ENCODE measurements at regions of chr13 and their contacts with region 1.

Region 1: GRCh38 chr13:40682449-40683240 is 16.2 kb upstream of the FOXO1 start:
- DNase-seq: no peak
- ATAC-seq: peak in 2 of 8 donors; percentile 12 to 30
- H3K4me3 ChIP-seq: no peak overlapping the region
- H3K27ac ChIP-seq: no peak overlapping the region
- H3K4me1 ChIP-seq: peaks cover 0 to 27% (median 13%) of the 10 kb centered on the region in 9 donors
- H3K27me3 ChIP-seq: no peaks in the 10 kb centered on the region
- CTCF ChIP-seq: peak; percentile 57 to 83 (median 70)

Region 2: DNA sequence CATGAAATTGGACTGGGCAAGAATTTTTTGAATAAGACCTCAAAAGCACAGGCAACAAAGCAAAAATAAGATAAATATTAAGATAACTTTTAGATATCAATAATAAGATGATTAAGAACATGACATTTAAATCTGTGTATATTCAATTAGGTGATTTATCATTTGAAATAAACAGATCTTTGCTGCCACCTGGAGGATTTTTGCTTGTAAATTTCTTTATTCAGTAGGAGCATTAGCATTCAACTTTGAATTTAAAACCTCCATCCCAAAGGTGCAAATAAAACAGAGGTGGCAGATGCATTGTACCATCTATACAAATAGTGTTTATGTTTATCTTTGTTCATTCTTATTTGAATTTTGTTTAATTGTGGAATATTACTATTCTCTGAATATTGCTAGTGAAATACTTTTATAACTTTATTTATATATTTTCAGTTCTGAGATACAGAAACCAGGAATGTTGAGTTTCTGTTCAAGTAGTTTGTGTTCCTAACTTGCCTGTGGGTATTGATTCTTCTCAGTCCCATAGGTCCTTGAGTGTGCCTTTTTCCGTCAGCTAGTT is 1006.2 kb before region 1 on chr13:
- intact Hi-C with region 1: loop called in 5 of 10 experiments (anchors 2 to 10 kb)
- DNase-seq: peak in 1 of 2 donors; percentile 36
- ATAC-seq: no peak
- H3K4me3 ChIP-seq: no peak overlapping the region
- H3K27ac ChIP-seq: no peak overlapping the region
- H3K4me1 ChIP-seq: peaks cover 0 to 4% (median 0%) of the 10 kb centered on the region in 9 donors
- H3K27me3 ChIP-seq: no peaks in the 10 kb centered on the region
- CTCF ChIP-seq: peak; percentile 14 to 72 (median 56)

Region 3: DNA sequence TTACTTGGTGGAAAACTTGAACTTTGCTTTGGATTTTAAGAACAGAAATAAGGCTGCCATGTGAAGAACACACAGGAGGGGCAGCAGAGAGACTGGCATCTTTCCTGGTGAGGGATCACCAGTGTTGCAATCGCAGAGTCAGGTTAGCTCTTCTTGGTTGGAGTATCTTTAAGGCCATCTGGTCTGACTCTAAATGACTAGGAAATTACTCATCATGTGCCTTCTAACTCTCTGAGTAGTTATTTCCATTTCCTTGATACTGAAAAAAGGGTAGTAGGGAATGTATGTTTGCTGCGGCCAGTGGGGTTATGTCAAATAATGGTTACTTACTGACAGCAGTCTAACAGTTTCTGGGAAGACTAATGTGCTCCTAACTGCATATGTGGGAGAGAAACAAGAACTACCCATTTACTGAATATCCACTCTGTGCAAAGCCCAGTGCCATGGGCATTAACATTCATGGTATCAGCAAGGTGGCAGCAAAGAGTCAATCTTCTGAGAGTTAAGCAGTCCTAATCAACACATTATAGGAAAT is 905.1 kb before region 1 on chr13:
- intact Hi-C with region 1: loop called in 7 of 10 experiments (anchors 5 to 10 kb)
- DNase-seq: no peak
- ATAC-seq: peak in 1 of 8 donors; percentile 56
- H3K4me3 ChIP-seq: no peak overlapping the region
- H3K27ac ChIP-seq: peak overlapping the region in 1 of 10 donors; percentile 51
- H3K4me1 ChIP-seq: peaks cover 0 to 17% (median 0%) of the 10 kb centered on the region in 9 donors
- H3K27me3 ChIP-seq: no peaks in the 10 kb centered on the region
- CTCF ChIP-seq: peak in 5 of 9 donors; percentile 22 to 41 (median 29)

Region 4: DNA sequence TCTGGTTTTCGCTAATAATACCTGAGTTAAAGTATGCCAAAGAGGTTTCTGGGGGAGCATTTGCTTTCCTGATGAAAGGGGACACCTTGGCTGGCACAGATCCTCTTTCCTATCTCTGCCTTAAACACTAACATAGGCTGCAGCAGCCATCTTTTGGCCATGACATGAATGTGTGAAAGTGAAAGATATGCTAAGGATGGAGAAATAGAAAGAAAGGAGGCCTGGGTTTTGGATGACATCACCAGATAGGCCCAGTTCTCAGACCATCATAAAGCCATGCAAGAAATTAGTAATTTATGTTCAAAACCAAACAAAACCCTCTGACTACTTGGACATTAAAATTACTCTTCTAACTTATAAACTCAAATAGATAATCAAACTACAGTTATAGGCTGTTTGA is 747.5 kb before region 1 on chr13:
- intact Hi-C with region 1: loop called in 9 of 10 experiments (anchors 5 to 10 kb)
- DNase-seq: no peak
- ATAC-seq: no peak
- H3K4me3 ChIP-seq: no peak overlapping the region
- H3K27ac ChIP-seq: no peak overlapping the region
- H3K4me1 ChIP-seq: no peaks in the 10 kb centered on the region
- H3K27me3 ChIP-seq: no peaks in the 10 kb centered on the region
- CTCF ChIP-seq: no peak

Region 5: DNA sequence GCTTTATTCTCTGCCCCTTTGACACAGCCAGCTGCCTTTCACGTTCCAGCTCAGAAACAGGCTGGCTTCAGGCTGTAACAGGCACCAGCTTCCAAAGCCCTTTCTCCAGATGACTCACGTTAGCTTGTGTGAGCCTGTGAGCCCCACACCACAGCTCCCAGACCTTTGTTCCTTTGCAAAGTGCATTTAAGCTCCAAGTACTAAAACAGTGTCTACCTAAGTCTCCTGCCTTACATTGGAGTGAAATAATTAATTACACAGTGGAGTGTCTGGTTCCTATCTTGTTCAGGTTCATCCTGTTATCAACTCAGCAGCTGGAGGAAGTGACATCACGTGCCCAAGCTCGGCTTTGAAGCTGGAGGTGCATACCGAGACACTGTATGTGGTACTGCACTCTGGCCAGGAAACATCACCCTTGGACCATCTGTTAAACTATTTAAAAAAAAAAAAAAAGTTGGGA is 492.0 kb before region 1 on chr13:
- intact Hi-C with region 1: loop called in 1 of 10 experiments (anchors 5 kb)
- DNase-seq: no peak
- ATAC-seq: peak; percentile 42 to 64 (median 56)
- H3K4me3 ChIP-seq: no peak overlapping the region
- H3K27ac ChIP-seq: peak overlapping the region; percentile 32 to 89 (median 78)
- H3K4me1 ChIP-seq: peaks cover 20 to 55% (median 42%) of the 10 kb centered on the region in 9 donors
- H3K27me3 ChIP-seq: no peaks in the 10 kb centered on the region
- CTCF ChIP-seq: no peak